ENCODE measurements at regions of chr12 and their contacts with region 1.

Region 1: GRCh38 chr12:121802846-121803630 is 771 bp upstream of the SETD1B start:
- DNase-seq: peak; percentile 78 to 96 (median 85)
- ATAC-seq: peak; percentile 47
- H3K4me3 ChIP-seq: peak overlapping the region; percentile 100
- H3K4me3 Mint-ChIP-seq: peak overlapping the region; percentile 99
- H3K27ac ChIP-seq: peak overlapping the region; percentile 96 to 97
- H3K27ac Mint-ChIP-seq: peak overlapping the region; percentile 98
- H3K4me1 ChIP-seq: peaks cover 50% of the 10 kb centered on the region
- H3K4me1 Mint-ChIP-seq: peaks cover 44% of the 10 kb centered on the region
- H3K27me3 ChIP-seq: no peaks in the 10 kb centered on the region
- H3K27me3 Mint-ChIP-seq: no peaks in the 10 kb centered on the region
- CTCF ChIP-seq: no peak

Region 2: DNA sequence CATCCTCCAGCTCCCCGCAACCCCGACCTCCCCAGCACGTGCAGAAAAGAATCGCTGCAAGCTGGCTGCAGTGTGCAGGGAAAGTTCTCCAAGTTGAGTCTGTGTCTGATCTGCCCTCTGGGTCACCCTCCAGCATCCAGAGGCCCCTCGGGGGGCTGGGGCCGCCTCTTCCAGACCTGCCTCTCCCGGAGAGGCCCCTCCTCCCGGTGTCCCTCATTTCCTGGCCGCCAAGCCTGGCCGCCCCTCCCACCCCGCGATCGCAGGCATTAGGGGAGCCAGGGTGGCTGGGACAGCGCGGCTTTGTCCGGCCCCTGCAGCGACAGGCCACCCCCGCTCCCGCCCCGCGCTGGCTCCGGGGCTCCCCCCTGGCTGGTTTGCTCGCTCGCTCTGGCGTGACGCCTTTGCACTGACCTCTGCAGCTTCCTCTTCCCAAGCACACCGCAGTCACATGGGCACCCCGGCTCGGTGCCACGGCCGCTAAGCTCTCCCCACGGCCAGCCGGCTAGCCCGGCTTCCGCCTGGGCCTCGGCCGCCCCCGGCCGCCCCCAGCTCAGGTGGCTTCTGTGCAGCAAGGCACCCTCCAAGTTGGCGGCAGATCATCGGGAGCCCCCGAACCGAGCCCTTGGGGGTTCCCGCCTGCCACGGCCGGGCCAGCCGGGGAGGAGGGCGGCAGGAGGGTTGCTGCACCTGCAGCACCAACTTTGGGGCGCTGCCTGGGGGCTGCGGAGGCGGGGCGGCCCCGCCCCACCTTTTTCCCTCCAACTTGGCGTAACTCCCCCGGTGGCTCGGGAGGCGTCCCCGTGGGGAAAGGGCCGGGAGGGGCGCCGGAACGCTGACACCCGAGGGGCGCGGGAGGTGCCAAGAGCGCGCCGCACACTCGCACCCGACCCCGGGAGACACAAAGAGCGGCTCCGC is 265.9 kb before region 1 on chr12:
- CTCF ChIA-PET with region 1: no interaction called
- POLR2A ChIA-PET with region 1: interaction called, 11 read pairs
- intact Hi-C with region 1: no loop called
- DNase-seq: peak in 13 of 14 experiments; percentile 16 to 84 (median 37)
- ATAC-seq: peak; percentile 10
- H3K4me3 ChIP-seq: peak overlapping the region; percentile 58
- H3K4me3 Mint-ChIP-seq: peak overlapping the region; percentile 94
- H3K27ac ChIP-seq: peak overlapping the region; percentile 67 to 80
- H3K27ac Mint-ChIP-seq: peak overlapping the region; percentile 93
- H3K4me1 ChIP-seq: peaks cover 60% of the 10 kb centered on the region
- H3K4me1 Mint-ChIP-seq: peaks cover 44% of the 10 kb centered on the region
- H3K27me3 ChIP-seq: no peaks in the 10 kb centered on the region
- H3K27me3 Mint-ChIP-seq: no peaks in the 10 kb centered on the region
- CTCF ChIP-seq: no peak

Region 3: GRCh38 chr12:121590476-121591143 is 212.4 kb before region 1 on chr12:
- CTCF ChIA-PET with region 1: no interaction called
- POLR2A ChIA-PET with region 1: interaction called, 16 read pairs
- intact Hi-C with region 1: no loop called
- DNase-seq: peak; percentile 50 to 91 (median 61)
- ATAC-seq: peak; percentile 70
- H3K4me3 ChIP-seq: peak overlapping the region; percentile 52
- H3K4me3 Mint-ChIP-seq: peak overlapping the region; percentile 92
- H3K27ac ChIP-seq: peak overlapping the region; percentile 86 to 94
- H3K27ac Mint-ChIP-seq: peak overlapping the region; percentile 99
- H3K4me1 ChIP-seq: peaks cover 45% of the 10 kb centered on the region
- H3K4me1 Mint-ChIP-seq: peaks cover 40% of the 10 kb centered on the region
- H3K27me3 ChIP-seq: no peaks in the 10 kb centered on the region
- H3K27me3 Mint-ChIP-seq: no peaks in the 10 kb centered on the region
- CTCF ChIP-seq: no peak

Region 4: GRCh38 chr12:121712461-121713256 is 90.4 kb before region 1 on chr12 and contains the start of gene TMEM120B:
- CTCF ChIA-PET with region 1: interaction called, 3 read pairs
- POLR2A ChIA-PET with region 1: interaction called, 44 read pairs
- intact Hi-C with region 1: no loop called
- DNase-seq: peak; percentile 71 to 93 (median 82)
- ATAC-seq: peak; percentile 87
- H3K4me3 ChIP-seq: peak within 1 kb of the TSS; percentile 99
- H3K4me3 Mint-ChIP-seq: peak within 1 kb of the TSS; percentile 90
- H3K27ac ChIP-seq: peak within 1 kb of the TSS; percentile 40 to 54
- H3K27ac Mint-ChIP-seq: peak within 1 kb of the TSS; percentile 83
- H3K4me1 ChIP-seq: peaks cover 27% of the 10 kb centered on the region
- H3K4me1 Mint-ChIP-seq: peaks cover 19% of the 10 kb centered on the region
- H3K27me3 ChIP-seq: no peaks in the 10 kb centered on the region
- H3K27me3 Mint-ChIP-seq: no peaks in the 10 kb centered on the region
- CTCF ChIP-seq: peak; percentile 26
- total RNA-seq, gene TMEM120B: 7.3 to 7.7 TPM

Region 5: DNA sequence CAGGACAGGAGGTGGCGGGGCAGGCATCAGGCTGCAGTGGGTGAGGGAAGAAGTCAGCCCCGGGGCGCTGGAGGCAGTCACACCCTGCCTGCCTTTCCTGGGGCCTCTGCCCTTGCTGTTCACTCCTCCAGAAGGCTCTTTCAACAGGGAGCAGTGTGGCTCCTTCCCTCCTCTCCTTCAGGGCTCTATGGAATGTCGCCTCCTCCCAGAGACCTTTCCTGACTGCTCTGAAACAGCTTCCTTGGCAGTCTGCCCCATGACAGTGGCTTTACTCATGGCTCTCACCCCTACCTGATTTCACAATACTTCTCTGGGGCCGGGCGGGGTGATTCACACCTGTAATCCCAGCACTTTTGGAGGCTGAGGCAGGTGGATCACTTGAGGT is 16.6 kb before region 1 on chr12:
- CTCF ChIA-PET with region 1: interaction called, 746 read pairs
- POLR2A ChIA-PET with region 1: interaction called, 1,869 read pairs
- intact Hi-C with region 1: loop called in 1 of 2 experiments (anchors 2 kb)
- DNase-seq: peak in 7 of 14 experiments; percentile 43 to 79 (median 57)
- ATAC-seq: peak; percentile 8
- H3K4me3 ChIP-seq: peak overlapping the region; percentile 36
- H3K4me3 Mint-ChIP-seq: peak overlapping the region; percentile 90
- H3K27ac ChIP-seq: peak overlapping the region; percentile 94 to 99
- H3K27ac Mint-ChIP-seq: peak overlapping the region; percentile 97
- H3K4me1 ChIP-seq: peaks cover 100% of the 10 kb centered on the region
- H3K4me1 Mint-ChIP-seq: peaks cover 93% of the 10 kb centered on the region
- H3K27me3 ChIP-seq: no peaks in the 10 kb centered on the region
- H3K27me3 Mint-ChIP-seq: no peaks in the 10 kb centered on the region
- CTCF ChIP-seq: no peak

Measured in CD4-positive, alpha-beta T cell (primary cell).